Activated T-helper 1 cell treated with anti-CD3 and anti-CD28 coated beads, Interleukin-12 subunit alpha, Interleukin-12 subunit beta, Interleukin-2, Interleukin-4 antibody, amounts not matched to agents 30 ng/mL and 10 ng/mL and 1 ng/mL, durations not matched to agents 14 hours and 24 hours and 36 hours (primary cell): ENCODE measurements at regions of chr2 and their contacts with region 1.

Region 1: DNA sequence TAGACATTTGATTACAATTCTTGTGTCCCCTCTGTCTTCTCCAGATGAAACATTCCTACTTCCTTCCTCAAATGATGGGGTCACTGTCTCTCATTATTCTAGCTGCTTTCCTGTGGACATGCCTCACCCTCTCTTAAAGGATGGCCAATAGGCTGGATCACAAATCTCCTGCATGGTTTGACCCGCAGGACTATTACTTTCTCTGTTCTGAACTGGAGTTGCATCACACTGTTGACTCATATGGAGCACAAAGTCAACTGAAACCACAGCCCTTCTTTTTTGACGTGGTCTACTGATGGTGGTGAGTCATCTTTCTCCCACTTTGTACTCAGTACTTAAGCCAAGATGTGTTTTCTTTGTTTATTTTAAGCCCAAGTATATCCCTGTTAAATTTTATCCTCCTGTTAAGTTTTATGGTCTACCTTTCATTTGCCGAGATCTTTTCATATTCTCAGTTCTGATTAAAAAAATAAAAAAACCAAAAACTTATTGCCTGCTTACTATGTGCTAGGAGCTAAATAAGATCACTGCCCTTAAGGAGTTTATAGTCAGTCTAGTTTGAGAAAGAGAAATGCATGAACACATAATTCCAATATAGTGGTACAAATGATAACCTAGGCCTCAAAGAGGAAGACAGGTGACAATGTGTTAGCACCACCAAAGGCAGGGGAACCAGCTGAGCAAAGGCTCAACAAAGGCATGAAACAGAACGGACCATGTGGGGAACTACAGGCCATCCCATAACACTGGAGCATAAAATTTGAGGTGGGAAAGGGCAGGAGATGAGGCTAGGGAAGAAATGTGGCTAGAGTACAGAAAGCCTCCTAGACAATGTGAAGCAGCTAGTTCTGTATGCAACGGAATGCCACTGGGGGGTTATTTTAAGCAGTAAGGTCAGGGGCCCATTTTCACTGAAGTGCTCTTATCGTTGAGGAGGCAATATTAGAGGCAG is 67.6 kb upstream of the ZFP36L2 start:
- DNase-seq: peak; percentile 66
- H3K4me3 Mint-ChIP-seq: peak overlapping the region; percentile 35
- H3K27ac Mint-ChIP-seq: peak overlapping the region; percentile 77
- H3K4me1 Mint-ChIP-seq: peaks cover 34% of the 10 kb centered on the region
- H3K27me3 Mint-ChIP-seq: no peaks in the 10 kb centered on the region

Region 2: DNA sequence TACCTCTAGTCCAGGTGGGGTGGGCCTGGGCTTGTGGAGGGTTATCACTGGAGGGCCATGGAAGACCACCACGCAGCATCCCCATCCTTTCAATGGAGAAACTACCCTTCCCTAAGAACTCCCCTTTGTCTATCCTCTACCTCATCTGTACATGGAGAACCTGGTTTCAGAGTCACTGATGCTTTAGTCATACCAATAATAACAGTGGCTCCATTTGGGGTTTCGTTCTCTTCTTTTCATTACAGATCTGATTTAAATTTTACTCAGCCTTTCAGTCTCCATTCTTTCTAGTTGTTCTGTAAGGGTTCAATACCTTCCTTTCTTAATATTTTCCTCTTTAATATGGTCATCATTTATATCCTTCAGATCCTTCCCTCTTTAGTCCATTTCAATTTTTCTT is 13.0 kb before region 1 on chr2:
- intact Hi-C with region 1: loop called (anchors 2 kb)
- DNase-seq: no peak
- H3K4me3 Mint-ChIP-seq: no peak overlapping the region
- H3K27ac Mint-ChIP-seq: no peak overlapping the region
- H3K4me1 Mint-ChIP-seq: peaks cover 8% of the 10 kb centered on the region
- H3K27me3 Mint-ChIP-seq: no peaks in the 10 kb centered on the region

Region 3: GRCh38 chr2:43313642-43314017 is 19.6 kb after region 1 on chr2:
- intact Hi-C with region 1: loop called (anchors 1 kb)
- DNase-seq: no peak
- H3K4me3 Mint-ChIP-seq: no peak overlapping the region
- H3K27ac Mint-ChIP-seq: no peak overlapping the region
- H3K4me1 Mint-ChIP-seq: peaks cover 11% of the 10 kb centered on the region
- H3K27me3 Mint-ChIP-seq: no peaks in the 10 kb centered on the region

Region 4: DNA sequence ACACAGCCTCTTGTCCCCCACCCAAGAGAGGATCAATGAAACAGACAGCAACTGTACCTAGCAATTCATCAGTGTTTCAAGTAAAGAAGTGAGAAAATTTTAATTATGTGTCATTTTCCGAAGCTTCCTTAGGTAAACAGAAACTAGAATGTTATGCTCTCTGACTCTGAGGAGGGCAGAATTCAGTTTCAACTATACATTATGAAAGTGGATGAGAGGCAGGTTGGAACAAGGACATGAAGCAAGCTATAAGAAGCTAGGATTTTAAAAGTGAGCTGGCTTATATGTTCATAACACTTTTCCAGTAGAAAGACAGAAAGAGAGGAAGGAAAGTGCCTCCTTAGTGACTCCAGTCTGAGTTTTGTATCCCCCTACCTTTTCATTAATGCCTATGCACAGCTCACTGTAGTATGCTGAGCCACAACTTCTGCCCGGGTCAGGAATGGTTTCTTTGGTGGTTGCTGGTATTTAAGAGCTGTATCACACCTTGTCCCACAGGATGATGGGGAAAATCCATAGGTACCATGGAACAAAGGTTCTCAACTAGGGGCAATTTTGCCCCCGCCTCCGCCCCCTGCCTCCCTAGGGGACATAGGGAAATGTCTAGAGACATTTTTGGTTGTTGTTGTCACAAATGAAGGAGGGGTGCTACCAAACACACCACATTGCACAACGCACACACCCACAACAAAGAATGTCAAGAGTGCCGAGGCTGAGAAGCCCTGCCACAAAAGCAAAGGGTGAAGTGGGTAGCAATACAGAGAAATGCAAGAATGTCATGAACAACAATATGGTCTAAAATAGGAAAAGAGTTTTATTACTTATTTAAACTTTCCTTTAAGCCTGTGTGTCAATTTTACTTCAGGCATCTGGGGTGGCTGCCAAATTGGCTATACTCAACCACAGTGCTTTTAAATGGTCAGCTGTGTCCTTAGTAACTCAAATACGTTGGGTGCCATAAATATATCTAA is 93.4 kb after region 1 on chr2:
- intact Hi-C with region 1: loop called (anchors 1 kb)
- DNase-seq: no peak
- H3K4me3 Mint-ChIP-seq: no peak overlapping the region
- H3K27ac Mint-ChIP-seq: peak overlapping the region; percentile 50
- H3K4me1 Mint-ChIP-seq: peaks cover 27% of the 10 kb centered on the region
- H3K27me3 Mint-ChIP-seq: no peaks in the 10 kb centered on the region

Region 5: GRCh38 chr2:43773876-43774613 is 480.0 kb after region 1 on chr2 and contains the start of gene DYNC2LI1:
- intact Hi-C with region 1: loop called (anchors 10 kb)
- DNase-seq: peak; percentile 71
- H3K4me3 Mint-ChIP-seq: peak within 1 kb of the TSS; percentile 92
- H3K27ac Mint-ChIP-seq: peak within 1 kb of the TSS; percentile 79
- H3K4me1 Mint-ChIP-seq: peaks cover 19% of the 10 kb centered on the region
- H3K27me3 Mint-ChIP-seq: peaks cover 3% of the 10 kb centered on the region
- total RNA-seq, gene DYNC2LI1: 6.2 and 6.6 TPM in 2 replicates

Region 6: DNA sequence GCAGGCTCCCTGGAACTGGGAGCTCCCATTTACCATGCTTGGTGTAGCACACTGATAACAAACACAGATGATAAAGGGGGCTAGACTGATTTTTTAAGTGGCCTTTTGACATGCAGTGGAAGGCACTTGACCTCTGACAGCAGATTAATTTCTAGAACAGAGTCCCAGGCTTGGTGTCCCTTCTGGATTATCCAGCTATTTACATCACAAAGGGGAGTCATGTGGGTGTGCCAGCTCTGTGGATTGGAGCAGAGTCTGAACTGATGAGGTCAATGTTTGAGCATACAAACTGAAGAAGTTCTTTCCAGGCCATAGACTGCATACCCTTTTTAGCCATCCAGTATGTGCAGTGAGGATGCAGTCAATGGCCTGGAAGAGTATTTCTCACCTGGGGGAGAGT is 1746.8 kb after region 1 on chr2:
- intact Hi-C with region 1: no loop called
- DNase-seq: no peak
- H3K4me3 Mint-ChIP-seq: no peak overlapping the region
- H3K27ac Mint-ChIP-seq: no peak overlapping the region
- H3K4me1 Mint-ChIP-seq: no peaks in the 10 kb centered on the region
- H3K27me3 Mint-ChIP-seq: peaks cover 3% of the 10 kb centered on the region